Activated CD4-positive, alpha-beta memory T cell treated with anti-CD3 and anti-CD28 coated beads for 36 hours (primary cell): ENCODE measurements at regions of chr12 and their contacts with region 1.

Region 1: DNA sequence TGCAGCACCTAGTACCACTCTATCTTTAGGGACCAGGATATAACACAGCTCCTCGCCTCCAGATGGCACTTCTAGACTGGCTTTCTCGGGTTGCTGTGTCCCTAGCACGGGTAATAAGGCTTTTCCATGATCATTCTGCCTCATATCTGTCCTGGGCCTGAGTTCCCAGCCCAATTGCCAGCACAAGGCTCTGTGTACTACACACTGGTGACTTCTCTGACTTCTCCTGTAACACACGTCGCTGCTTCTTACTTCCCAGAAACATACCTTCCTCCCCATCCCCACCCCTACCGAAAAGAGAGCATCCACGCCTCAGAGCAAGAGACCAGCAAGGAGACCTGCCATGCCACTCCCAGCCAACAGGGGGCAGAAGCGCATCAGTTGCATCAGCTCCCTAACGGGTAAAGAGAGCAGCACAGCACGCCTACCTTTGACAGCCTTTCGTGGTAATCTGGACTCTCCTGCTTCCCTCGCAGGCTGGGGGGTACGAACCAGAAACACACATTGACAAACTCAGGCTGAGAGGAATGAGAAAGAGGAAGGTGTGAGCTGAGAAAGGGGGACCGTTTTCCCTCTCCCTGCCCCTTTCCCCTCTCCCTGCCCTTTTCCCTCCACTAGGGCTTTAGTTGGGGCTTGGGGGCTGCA is 21.2 kb upstream of the ZNF740 start:
- DNase-seq: peak; percentile 95
- H3K4me3 Mint-ChIP-seq: no peak overlapping the region
- H3K27ac Mint-ChIP-seq: no peak overlapping the region
- H3K4me1 Mint-ChIP-seq: peaks cover 6% of the 10 kb centered on the region
- H3K27me3 Mint-ChIP-seq: no peaks in the 10 kb centered on the region

Region 2: DNA sequence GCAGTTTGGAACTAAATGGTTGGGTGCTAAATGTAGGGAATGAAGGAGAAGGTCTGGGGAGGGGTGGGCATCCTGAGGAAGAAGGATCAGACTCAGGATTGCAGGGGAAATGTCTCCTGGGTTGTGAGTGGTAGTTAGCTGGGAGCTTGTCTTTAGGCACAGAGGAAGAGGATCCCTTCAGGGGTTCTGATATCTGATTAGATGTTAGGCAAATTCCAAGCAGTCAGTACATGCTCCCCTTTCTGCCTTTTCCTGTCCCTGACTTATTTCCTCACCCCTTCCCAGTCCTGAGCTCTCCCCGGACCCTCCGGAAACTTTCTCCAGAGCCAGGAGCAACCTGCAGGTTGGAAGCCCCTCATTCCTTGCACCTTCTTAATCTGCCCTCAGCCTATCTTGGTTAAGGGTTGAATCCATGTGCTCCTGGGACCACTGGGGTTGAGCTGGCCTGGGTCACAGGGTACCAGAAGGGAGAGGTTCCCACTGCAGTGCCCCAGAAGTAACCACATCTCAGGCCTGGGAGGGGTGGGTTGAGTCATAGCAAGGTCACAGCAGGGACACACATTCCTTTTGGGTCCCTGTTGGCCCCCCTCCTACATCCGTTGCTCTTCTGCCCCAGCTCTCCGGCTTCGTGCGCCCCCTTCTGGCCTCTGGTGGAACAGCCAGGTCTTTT is 60.2 kb before region 1 on chr12:
- CTCF ChIA-PET with region 1: interaction called, 17 read pairs
- POLR2A ChIA-PET with region 1: no interaction called
- intact Hi-C with region 1: no loop called
- DNase-seq: peak; percentile 95
- H3K4me3 Mint-ChIP-seq: peak overlapping the region; percentile 13
- H3K27ac Mint-ChIP-seq: peak overlapping the region; percentile 56
- H3K4me1 Mint-ChIP-seq: peaks cover 41% of the 10 kb centered on the region
- H3K27me3 Mint-ChIP-seq: peaks cover 5% of the 10 kb centered on the region

Region 3: DNA sequence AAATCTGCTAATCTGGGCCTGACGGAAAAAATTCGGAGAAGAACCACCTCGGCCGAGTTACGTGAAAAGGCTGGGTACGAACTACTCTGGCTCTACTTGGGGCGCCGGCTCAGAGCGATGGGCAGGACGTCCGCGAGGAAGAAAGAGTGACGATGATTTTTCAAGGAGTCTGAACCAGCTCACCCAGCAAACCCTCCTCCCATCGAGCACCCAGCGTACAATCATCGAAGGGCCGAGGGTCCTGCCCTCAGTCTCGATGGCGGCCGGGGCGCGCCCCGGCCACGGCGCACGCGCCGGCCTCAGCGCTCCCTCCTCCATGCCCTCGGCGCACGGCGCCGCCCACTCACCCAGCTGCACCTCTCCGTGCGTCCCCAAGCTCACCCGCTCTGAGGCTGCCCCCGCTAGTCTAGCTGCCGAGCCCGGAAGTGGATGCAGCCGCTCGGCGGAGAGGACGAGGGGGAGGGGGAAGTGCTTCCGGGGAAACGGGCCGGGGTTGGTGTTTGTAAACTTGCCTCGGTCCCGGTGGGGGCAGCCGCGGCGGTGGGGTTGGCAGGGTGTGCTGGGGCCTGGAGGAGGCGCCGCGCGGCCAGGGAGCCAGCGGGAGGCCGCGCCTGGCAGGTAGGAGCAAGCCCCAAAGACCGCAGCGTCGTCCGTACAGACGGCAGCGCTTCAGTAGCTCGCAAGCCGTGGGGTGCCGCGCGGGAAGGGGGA is 21.1 kb after region 1 on chr12 and contains the starts of genes CSAD and ZNF740:
- CTCF ChIA-PET with region 1: interaction called, 46 read pairs
- POLR2A ChIA-PET with region 1: interaction called, 12 read pairs
- intact Hi-C with region 1: no loop called
- DNase-seq: peak; percentile 99
- H3K4me3 Mint-ChIP-seq: peak within 1 kb of the TSS; percentile 96
- H3K27ac Mint-ChIP-seq: peak within 1 kb of the TSS; percentile 94
- H3K4me1 Mint-ChIP-seq: peaks cover 47% of the 10 kb centered on the region
- H3K27me3 Mint-ChIP-seq: no peaks in the 10 kb centered on the region
- total RNA-seq, gene CSAD: 21.4 to 23.7 TPM
- total RNA-seq, gene ZNF740: 32.6 to 37.5 TPM

Region 4: GRCh38 chr12:53200458-53201176 is 41.3 kb after region 1 on chr12:
- CTCF ChIA-PET with region 1: interaction called, 61 read pairs
- POLR2A ChIA-PET with region 1: interaction called, 3 read pairs
- intact Hi-C with region 1: no loop called
- DNase-seq: peak; percentile 77
- H3K4me3 Mint-ChIP-seq: peak overlapping the region; percentile 45
- H3K27ac Mint-ChIP-seq: peak overlapping the region; percentile 88
- H3K4me1 Mint-ChIP-seq: peaks cover 72% of the 10 kb centered on the region
- H3K27me3 Mint-ChIP-seq: no peaks in the 10 kb centered on the region

Region 5: GRCh38 chr12:53213348-53213747 is 54.0 kb after region 1 on chr12:
- CTCF ChIA-PET with region 1: interaction called, 28 read pairs
- POLR2A ChIA-PET with region 1: no interaction called
- intact Hi-C with region 1: no loop called
- DNase-seq: peak; percentile 89
- H3K4me3 Mint-ChIP-seq: no peak overlapping the region
- H3K27ac Mint-ChIP-seq: no peak overlapping the region
- H3K4me1 Mint-ChIP-seq: peaks cover 61% of the 10 kb centered on the region
- H3K27me3 Mint-ChIP-seq: no peaks in the 10 kb centered on the region

Region 6: GRCh38 chr12:53287741-53288216 is 128.5 kb after region 1 on chr12:
- CTCF ChIA-PET with region 1: interaction called, 34 read pairs
- POLR2A ChIA-PET with region 1: no interaction called
- intact Hi-C with region 1: loop called (anchors 1 kb)
- DNase-seq: peak; percentile 76
- H3K4me3 Mint-ChIP-seq: no peak overlapping the region
- H3K27ac Mint-ChIP-seq: peak overlapping the region; percentile 68
- H3K4me1 Mint-ChIP-seq: peaks cover 19% of the 10 kb centered on the region
- H3K27me3 Mint-ChIP-seq: no peaks in the 10 kb centered on the region

Region 7: GRCh38 chr12:53344824-53345485 is 185.6 kb after region 1 on chr12:
- CTCF ChIA-PET with region 1: interaction called, 36 read pairs
- POLR2A ChIA-PET with region 1: no interaction called
- intact Hi-C with region 1: loop called (anchors 1 kb)
- DNase-seq: peak; percentile 86
- H3K4me3 Mint-ChIP-seq: peak overlapping the region; percentile 92
- H3K27ac Mint-ChIP-seq: peak overlapping the region; percentile 56
- H3K4me1 Mint-ChIP-seq: peaks cover 14% of the 10 kb centered on the region
- H3K27me3 Mint-ChIP-seq: no peaks in the 10 kb centered on the region